Activated CD4-positive, alpha-beta memory T cell treated with anti-CD3 and anti-CD28 coated beads for 36 hours (primary cell): ENCODE measurements at regions of chr3 and their contacts with region 1.

Region 1: DNA sequence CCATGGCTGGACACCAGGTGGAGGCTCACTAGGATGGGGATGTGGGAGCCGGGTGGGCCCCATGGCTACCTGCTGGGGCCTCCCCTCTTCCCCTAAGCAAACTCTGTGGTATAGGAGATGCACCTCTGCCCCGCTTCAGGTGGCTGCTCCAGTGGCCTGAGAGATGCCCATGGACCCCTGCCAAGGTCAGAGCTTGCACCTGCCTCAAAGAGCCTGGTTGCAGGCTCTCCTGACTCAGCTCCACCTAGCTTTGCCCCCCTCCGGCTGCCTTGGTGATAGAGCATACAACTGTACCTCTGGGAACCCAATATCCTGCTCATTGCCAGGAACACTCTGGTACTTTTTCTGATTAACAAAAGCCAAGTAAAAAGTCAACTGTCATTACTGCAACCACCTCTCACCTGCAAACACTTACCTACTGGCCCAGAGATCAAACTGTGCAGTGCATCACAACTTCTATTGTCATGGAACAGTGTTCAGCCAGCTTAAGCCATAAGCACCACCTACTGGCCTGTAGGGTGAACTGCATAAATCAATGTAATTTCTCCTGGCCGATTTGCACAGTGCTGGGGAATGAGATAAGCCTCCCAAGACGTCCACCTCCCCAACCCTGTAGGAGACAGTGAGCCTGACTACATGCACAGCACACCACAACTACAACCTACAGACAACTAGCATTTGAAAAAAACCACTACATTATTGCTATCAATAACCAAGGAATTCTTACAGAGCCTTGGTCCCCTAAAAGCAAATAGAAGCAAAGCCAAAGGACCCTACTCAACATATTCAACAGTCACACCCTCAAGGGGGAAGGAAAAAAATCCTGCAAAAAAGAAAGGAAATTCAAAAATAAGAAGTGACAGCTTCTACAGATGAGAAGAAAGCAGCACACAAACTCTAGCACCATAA is 352.4 kb upstream of the ARHGEF26 start:
- DNase-seq: peak; percentile 57
- H3K4me3 Mint-ChIP-seq: no peak overlapping the region
- H3K27ac Mint-ChIP-seq: no peak overlapping the region
- H3K4me1 Mint-ChIP-seq: peaks cover 2% of the 10 kb centered on the region
- H3K27me3 Mint-ChIP-seq: peaks cover 2% of the 10 kb centered on the region

Region 2: DNA sequence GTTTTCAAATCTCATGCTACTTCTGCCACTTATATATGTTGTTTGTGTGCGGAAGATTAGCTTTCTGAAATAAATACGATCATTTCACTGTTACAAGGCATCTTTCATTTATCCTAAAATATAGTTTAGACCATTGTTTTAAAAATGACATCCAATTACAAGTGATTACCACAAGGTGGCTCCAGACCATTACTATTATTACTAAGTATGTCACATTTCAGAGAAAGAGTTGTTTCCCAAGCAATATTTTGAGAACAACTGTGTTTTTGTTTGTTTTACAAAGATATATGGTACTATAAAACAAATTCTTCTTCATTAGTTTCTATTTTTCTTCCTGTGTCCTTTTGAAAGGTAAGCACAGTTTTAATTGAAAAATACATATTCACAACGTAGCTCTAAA is 742.8 kb before region 1 on chr3:
- CTCF ChIA-PET with region 1: interaction called, 6 read pairs
- POLR2A ChIA-PET with region 1: no interaction called
- intact Hi-C with region 1: loop called (anchors 1 kb)
- DNase-seq: no peak
- H3K4me3 Mint-ChIP-seq: no peak overlapping the region
- H3K27ac Mint-ChIP-seq: no peak overlapping the region
- H3K4me1 Mint-ChIP-seq: no peaks in the 10 kb centered on the region
- H3K27me3 Mint-ChIP-seq: peaks cover 6% of the 10 kb centered on the region

Region 3: DNA sequence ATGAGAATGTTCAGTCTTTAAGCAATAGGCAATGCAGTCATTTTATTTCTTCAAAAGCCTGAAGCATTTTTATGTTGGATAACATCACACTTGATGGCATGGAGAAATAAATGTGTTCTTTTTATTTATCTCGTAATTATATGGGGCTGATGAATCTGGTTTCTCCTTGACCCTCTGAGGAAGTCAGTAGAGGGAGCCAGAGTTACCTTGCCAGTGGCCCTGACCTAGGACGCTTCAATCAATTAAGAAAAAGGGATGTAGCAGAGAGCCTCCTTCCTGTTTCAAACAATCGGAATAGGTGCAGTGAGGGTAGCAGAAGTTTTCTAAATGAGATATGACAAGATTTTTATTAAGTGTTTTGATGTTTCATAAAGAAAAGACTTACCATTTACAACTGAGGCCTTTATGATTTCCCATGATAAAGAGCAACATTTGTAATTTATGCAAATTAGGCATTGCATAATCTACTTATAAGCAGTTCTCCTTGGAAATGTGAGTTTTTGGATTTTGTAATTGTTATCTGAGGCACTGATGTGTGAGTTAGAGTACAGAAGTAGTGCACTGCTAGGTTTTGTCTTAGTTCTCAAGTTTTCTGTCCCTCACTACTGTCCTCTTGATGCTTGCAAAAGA is 477.6 kb before region 1 on chr3:
- CTCF ChIA-PET with region 1: interaction called, 9 read pairs
- POLR2A ChIA-PET with region 1: no interaction called
- intact Hi-C with region 1: loop called (anchors 1 kb)
- DNase-seq: no peak
- H3K4me3 Mint-ChIP-seq: no peak overlapping the region
- H3K27ac Mint-ChIP-seq: no peak overlapping the region
- H3K4me1 Mint-ChIP-seq: peaks cover 38% of the 10 kb centered on the region
- H3K27me3 Mint-ChIP-seq: no peaks in the 10 kb centered on the region

Region 4: GRCh38 chr3:153348457-153349107 is 420.2 kb before region 1 on chr3:
- CTCF ChIA-PET with region 1: no interaction called
- POLR2A ChIA-PET with region 1: no interaction called
- intact Hi-C with region 1: no loop called
- DNase-seq: no peak
- H3K4me3 Mint-ChIP-seq: no peak overlapping the region
- H3K27ac Mint-ChIP-seq: no peak overlapping the region
- H3K4me1 Mint-ChIP-seq: no peaks in the 10 kb centered on the region
- H3K27me3 Mint-ChIP-seq: no peaks in the 10 kb centered on the region

Region 5: DNA sequence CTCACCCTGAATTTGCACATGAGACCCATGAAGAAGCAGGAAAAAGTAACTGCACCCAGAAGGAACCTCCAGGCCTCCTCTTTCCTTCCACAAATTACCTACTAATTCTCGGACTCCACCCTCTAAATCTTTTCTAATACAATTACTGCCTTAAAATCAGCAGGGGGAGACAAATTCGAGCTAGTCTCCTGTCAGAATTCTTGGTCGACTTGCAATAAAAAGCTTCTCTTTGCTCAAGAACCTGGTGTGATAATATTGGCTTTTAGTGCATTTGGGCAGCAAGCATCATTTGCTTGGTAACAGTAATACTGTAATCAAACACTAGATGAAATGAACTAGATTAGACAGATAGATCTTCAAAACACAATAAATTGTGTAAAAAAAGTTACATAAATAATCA is 324.9 kb before region 1 on chr3:
- CTCF ChIA-PET with region 1: no interaction called
- POLR2A ChIA-PET with region 1: no interaction called
- intact Hi-C with region 1: loop called (anchors 2 kb)
- DNase-seq: no peak
- H3K4me3 Mint-ChIP-seq: no peak overlapping the region
- H3K27ac Mint-ChIP-seq: no peak overlapping the region
- H3K4me1 Mint-ChIP-seq: peaks cover 18% of the 10 kb centered on the region
- H3K27me3 Mint-ChIP-seq: peaks cover 1% of the 10 kb centered on the region

Region 6: GRCh38 chr3:153513236-153513635 is 255.6 kb before region 1 on chr3:
- CTCF ChIA-PET with region 1: interaction called, 3 read pairs
- POLR2A ChIA-PET with region 1: no interaction called
- intact Hi-C with region 1: loop called (anchors 5 kb)
- DNase-seq: no peak
- H3K4me3 Mint-ChIP-seq: no peak overlapping the region
- H3K27ac Mint-ChIP-seq: no peak overlapping the region
- H3K4me1 Mint-ChIP-seq: no peaks in the 10 kb centered on the region
- H3K27me3 Mint-ChIP-seq: no peaks in the 10 kb centered on the region

Region 7: DNA sequence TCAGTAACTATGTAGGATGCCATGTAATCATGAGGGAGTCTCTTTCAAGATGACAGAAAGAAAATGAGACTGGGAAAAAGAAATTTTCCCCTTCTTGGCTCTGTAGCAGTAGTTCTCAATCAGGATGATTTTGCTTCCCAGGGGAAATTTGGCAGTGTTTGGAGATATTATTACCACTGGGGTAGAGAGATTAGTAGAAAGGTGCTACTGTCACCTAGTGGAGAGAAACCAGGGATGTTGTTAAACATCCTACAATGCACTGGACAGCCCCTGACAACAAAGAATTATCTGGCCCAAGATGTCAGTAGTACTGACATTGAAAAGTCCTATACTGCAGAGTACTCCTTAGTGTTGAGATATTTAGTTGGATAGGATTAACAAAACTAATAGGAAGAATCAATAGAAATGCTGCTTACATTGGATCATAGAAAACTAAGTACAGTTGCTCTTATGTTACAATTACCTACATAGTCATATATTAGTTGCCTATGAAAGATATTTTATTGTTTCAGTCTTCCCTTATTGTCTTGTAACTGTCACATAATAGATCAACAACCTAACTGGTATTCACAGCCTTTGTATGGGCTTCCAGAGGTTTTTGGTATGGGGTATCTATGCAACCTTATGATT is 173.5 kb before region 1 on chr3:
- CTCF ChIA-PET with region 1: interaction called, 6 read pairs
- POLR2A ChIA-PET with region 1: no interaction called
- intact Hi-C with region 1: loop called (anchors 5 kb)
- DNase-seq: no peak
- H3K4me3 Mint-ChIP-seq: no peak overlapping the region
- H3K27ac Mint-ChIP-seq: no peak overlapping the region
- H3K4me1 Mint-ChIP-seq: peaks cover 13% of the 10 kb centered on the region
- H3K27me3 Mint-ChIP-seq: no peaks in the 10 kb centered on the region

Region 8: GRCh38 chr3:153744889-153745288 is 23.9 kb before region 1 on chr3:
- CTCF ChIA-PET with region 1: no interaction called
- POLR2A ChIA-PET with region 1: no interaction called
- intact Hi-C with region 1: no loop called
- DNase-seq: no peak
- H3K4me3 Mint-ChIP-seq: no peak overlapping the region
- H3K27ac Mint-ChIP-seq: no peak overlapping the region
- H3K4me1 Mint-ChIP-seq: no peaks in the 10 kb centered on the region
- H3K27me3 Mint-ChIP-seq: no peaks in the 10 kb centered on the region

Region 9: GRCh38 chr3:153756816-153757215 is 12.0 kb before region 1 on chr3:
- CTCF ChIA-PET with region 1: interaction called, 10 read pairs
- POLR2A ChIA-PET with region 1: no interaction called
- intact Hi-C with region 1: no loop called
- DNase-seq: no peak
- H3K4me3 Mint-ChIP-seq: no peak overlapping the region
- H3K27ac Mint-ChIP-seq: no peak overlapping the region
- H3K4me1 Mint-ChIP-seq: no peaks in the 10 kb centered on the region
- H3K27me3 Mint-ChIP-seq: no peaks in the 10 kb centered on the region

Region 10: GRCh38 chr3:153855772-153856171 is 87.0 kb after region 1 on chr3:
- CTCF ChIA-PET with region 1: no interaction called
- POLR2A ChIA-PET with region 1: no interaction called
- intact Hi-C with region 1: no loop called
- DNase-seq: no peak
- H3K4me3 Mint-ChIP-seq: no peak overlapping the region
- H3K27ac Mint-ChIP-seq: no peak overlapping the region
- H3K4me1 Mint-ChIP-seq: no peaks in the 10 kb centered on the region
- H3K27me3 Mint-ChIP-seq: peaks cover 5% of the 10 kb centered on the region